ENCODE measurements at regions of chr11 and their contacts with region 1.

Region 1: GRCh38 chr11:47176328-47177228 is at the start of gene ARFGAP2:
- DNase-seq: peak; percentile 100
- CTCF ChIP-seq: no peak

Region 2: GRCh38 chr11:47033439-47033838 is 143.1 kb before region 1 on chr11:
- CTCF ChIA-PET with region 1: no interaction called
- POLR2A ChIA-PET with region 1: no interaction called
- DNase-seq: no peak
- CTCF ChIP-seq: no peak

Region 3: GRCh38 chr11:47161134-47161854 is 15.3 kb before region 1 on chr11:
- CTCF ChIA-PET with region 1: interaction called, 21 read pairs
- POLR2A ChIA-PET with region 1: interaction called, 6 read pairs
- DNase-seq: peak; percentile 83
- CTCF ChIP-seq: peak; percentile 76

Region 4: GRCh38 chr11:47248664-47249377 is 72.2 kb after region 1 on chr11 and contains the start of gene ACP2:
- CTCF ChIA-PET with region 1: interaction called, 12 read pairs
- POLR2A ChIA-PET with region 1: no interaction called
- DNase-seq: peak; percentile 88
- CTCF ChIP-seq: peak; percentile 58

Region 5: GRCh38 chr11:47269002-47269828 is 92.6 kb after region 1 on chr11:
- CTCF ChIA-PET with region 1: interaction called, 10 read pairs
- POLR2A ChIA-PET with region 1: no interaction called
- DNase-seq: peak; percentile 93
- CTCF ChIP-seq: no peak

Measured in GM10248 (cell line).